Ascending aorta (tissue), 2 donors: ENCODE measurements at regions of chr12 and their contacts with region 1.

Region 1: DNA sequence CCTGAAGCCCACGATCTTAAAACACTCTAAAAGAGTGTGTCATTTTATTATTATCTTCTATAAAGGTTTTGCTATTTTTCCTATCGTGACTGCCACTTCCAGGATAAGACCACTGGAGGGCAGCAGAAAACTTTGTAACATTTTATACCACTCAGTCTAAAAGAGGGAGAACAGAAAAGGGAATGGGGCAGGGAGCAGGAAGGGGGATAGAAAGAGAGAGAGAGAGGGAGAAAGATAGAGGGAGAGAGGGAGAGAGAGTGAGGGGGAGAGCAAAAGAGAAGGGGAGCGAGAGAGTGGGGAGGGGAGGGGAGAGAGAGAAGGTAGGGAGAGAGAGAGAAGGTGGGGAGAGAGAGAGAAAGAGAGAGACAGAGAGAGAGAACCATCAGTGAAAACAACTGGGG is 2.0 kb upstream of the ART4 start:
- DNase-seq: peak in 1 of 2 donors; percentile 79
- H3K4me3 ChIP-seq: no peak overlapping the region
- H3K27ac ChIP-seq: peak overlapping the region; percentile 73 to 87
- H3K4me1 ChIP-seq: peaks cover 12 to 72% of the 10 kb centered on the region in 2 donors
- H3K27me3 ChIP-seq: no peaks in the 10 kb centered on the region
- CTCF ChIP-seq: peak; percentile 64 to 80 (median 76)

Region 2: DNA sequence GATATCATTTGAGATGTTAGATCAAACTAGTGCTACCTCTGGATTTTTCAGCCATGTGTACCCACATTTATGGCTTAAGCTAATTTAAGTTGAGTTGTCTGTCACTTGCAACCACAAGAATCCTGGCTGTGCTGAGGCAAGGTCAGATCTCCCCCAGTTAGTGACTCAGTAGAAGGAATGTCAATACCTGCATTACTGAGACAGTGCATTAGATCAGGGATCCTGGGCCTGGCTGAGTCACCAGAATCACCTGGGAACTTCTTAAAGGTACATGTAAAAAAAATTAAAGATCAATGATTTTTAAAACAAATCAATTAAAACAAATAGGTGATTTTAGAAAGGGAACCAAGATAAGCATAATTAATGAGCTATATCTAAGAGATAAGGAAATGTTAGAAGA is 779.3 kb before region 1 on chr12:
- intact Hi-C with region 1: no loop called
- DNase-seq: no peak
- H3K4me3 ChIP-seq: no peak overlapping the region
- H3K27ac ChIP-seq: no peak overlapping the region
- H3K4me1 ChIP-seq: no peaks in the 10 kb centered on the region
- H3K27me3 ChIP-seq: no peaks in the 10 kb centered on the region
- CTCF ChIP-seq: no peak

Region 3: DNA sequence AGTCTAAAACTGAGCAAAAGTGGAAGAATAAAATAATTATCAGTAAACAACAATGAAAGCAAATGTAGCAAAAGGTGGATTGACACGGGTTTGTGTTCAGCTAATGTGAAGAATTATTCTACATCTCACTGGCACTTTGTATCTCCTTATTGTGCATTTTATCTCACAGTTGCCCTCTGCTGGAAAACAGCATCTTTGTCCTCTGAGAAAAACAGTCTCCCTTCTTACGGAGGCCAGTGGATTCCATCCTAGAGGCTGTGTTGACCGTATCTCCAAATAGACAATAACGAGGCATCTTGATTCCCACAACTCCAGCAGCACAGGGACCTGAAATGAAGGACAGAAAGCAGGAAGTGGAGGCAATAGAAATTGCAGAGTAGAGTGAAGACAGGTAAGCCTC is 226.4 kb before region 1 on chr12:
- intact Hi-C with region 1: no loop called
- DNase-seq: no peak
- H3K4me3 ChIP-seq: no peak overlapping the region
- H3K27ac ChIP-seq: no peak overlapping the region
- H3K4me1 ChIP-seq: no peaks in the 10 kb centered on the region
- H3K27me3 ChIP-seq: no peaks in the 10 kb centered on the region
- CTCF ChIP-seq: peak in 2 of 3 experiments; percentile 9 to 43

Region 4: DNA sequence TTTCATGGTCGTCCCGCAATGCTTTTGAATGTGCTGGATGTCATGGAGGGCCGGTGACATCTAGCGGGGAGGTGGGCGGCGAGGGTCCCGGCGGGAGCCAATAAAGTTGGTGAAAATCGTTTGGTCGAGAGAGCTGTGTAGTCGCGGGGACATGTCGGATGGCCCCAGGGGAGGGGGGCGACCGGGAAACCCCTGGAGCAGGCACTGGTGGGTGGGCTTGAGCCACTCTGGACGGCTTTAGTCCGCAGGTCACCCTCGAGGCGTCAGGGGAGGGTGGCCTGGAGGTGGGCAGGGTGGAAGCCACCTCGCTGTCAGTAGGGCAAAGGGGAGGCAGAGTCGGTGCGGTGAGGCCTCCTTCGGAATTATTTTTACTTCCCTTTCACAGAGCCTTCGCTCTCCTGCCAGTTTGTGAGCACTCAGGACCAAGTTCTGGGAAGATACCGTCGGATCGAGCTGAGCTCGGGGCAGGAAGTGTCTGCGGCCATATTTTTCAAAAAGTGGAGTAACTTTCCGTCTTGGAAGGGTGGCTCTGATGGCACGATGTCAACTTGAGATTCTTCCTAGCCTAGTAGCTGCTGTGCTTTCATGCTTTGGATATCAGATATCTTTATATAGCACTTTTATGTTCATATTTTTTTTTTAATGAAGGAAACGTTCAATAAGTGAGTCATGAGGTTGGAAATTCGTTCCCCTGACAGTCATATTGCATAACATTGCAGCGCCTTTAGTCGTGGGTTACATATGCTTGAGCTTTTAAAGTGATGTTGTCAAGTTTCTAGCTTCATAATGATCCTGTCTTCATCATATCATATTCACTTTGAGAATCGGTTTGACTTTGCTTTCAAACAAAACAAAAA is 70.2 kb before region 1 on chr12:
- intact Hi-C with region 1: loop called (anchors 2 kb)
- DNase-seq: peak in 1 of 2 donors; percentile 84
- H3K4me3 ChIP-seq: peak overlapping the region; percentile 78 to 87
- H3K27ac ChIP-seq: peak overlapping the region; percentile 99
- H3K4me1 ChIP-seq: peaks cover 0 to 15% of the 10 kb centered on the region in 2 donors
- H3K27me3 ChIP-seq: no peaks in the 10 kb centered on the region
- CTCF ChIP-seq: no peak

Region 5: GRCh38 chr12:14892726-14893505 is 47.6 kb after region 1 on chr12:
- intact Hi-C with region 1: loop called (anchors 2 kb)
- DNase-seq: peak; percentile 25 to 86
- H3K4me3 ChIP-seq: peak overlapping the region in 1 of 2 donors; percentile 33
- H3K27ac ChIP-seq: peak overlapping the region; percentile 85 to 88
- H3K4me1 ChIP-seq: peaks cover 7 to 28% of the 10 kb centered on the region in 2 donors
- H3K27me3 ChIP-seq: no peaks in the 10 kb centered on the region
- CTCF ChIP-seq: peak in 2 of 3 experiments; percentile 18 to 20

Region 6: GRCh38 chr12:14995583-14996425 is 150.5 kb after region 1 on chr12:
- intact Hi-C with region 1: loop called (anchors 1 kb)
- DNase-seq: no peak
- H3K4me3 ChIP-seq: no peak overlapping the region
- H3K27ac ChIP-seq: no peak overlapping the region
- H3K4me1 ChIP-seq: peaks cover 0 to 6% of the 10 kb centered on the region in 2 donors
- H3K27me3 ChIP-seq: no peaks in the 10 kb centered on the region
- CTCF ChIP-seq: peak; percentile 56 to 68 (median 58)

Region 7: GRCh38 chr12:15220994-15221885 is 375.9 kb after region 1 on chr12 and contains the start of gene RERG:
- intact Hi-C with region 1: loop called (anchors 2 kb)
- DNase-seq: peak in 1 of 2 donors; percentile 91
- H3K4me3 ChIP-seq: peak within 1 kb of the TSS; percentile 55 to 66
- H3K27ac ChIP-seq: peak within 1 kb of the TSS; percentile 83 to 86
- H3K4me1 ChIP-seq: peaks cover 0 to 9% of the 10 kb centered on the region in 2 donors
- H3K27me3 ChIP-seq: no peaks in the 10 kb centered on the region
- CTCF ChIP-seq: peak; percentile 98 to 100 (median 99)
- total RNA-seq, gene RERG: 55.7 TPM

Region 8: DNA sequence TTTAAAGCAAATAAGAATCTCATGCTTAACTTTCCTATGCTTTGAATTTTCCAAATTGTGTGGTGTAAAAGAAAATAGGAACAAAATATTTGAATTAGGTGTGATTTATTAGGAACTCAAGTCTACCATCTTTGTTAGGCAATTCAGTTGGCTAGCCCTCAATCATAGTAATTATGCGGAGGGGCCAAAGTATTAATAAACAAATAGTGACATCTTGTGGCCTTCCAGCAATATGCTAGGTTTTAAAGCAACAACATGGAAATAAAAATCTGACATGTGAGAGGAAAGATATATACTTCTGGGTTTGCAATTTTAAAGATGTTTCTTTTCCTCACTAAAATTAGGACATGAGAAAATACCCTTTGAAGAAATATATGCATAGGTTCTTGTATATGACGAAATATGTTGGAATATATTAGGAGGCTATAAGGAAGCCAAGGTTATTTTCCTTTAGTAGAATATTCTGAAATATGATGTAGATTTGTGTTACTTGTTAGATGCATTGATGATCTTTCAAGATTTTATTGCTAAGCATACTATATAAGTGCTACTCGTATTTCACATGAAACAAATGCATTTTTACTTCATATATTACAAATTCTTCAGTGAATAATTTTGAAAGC is 677.3 kb after region 1 on chr12:
- intact Hi-C with region 1: loop called (anchors 10 kb)
- DNase-seq: no peak
- H3K4me3 ChIP-seq: no peak overlapping the region
- H3K27ac ChIP-seq: no peak overlapping the region
- H3K4me1 ChIP-seq: no peaks in the 10 kb centered on the region
- H3K27me3 ChIP-seq: no peaks in the 10 kb centered on the region
- CTCF ChIP-seq: peak; percentile 53 to 64 (median 55)